ENCODE measurements at regions of chr12 and their contacts with region 1.

Region 1: DNA sequence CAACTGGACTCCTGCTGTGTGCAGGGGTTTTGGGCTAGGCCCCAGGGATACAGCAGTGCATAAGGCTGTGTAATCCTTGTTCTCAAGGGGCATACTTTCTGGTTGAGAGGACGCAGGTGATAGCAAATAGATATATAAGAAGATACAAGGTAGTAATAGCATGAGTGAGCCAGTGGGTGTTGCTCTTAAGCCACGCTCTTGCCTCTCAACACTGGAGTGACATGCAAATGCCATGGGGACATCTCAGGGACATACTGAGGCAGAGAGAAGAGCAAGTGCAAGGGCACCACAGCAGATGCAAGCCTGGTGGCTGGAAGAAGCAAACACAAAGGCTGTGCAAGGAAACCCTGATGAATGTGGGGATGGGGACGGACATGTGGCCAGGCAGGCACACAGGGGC is 223.3 kb downstream of the CHST11 start:
- DNase-seq: no peak
- ATAC-seq: peak in 1 of 8 donors; percentile 12
- H3K4me3 ChIP-seq: no peak overlapping the region
- H3K27ac ChIP-seq: peak overlapping the region in 1 of 10 donors; percentile 37
- H3K4me1 ChIP-seq: peaks cover 0 to 53% (median 13%) of the 10 kb centered on the region in 9 donors
- H3K27me3 ChIP-seq: no peaks in the 10 kb centered on the region
- CTCF ChIP-seq: peak in 1 of 9 donors; percentile 27

Region 2: GRCh38 chr12:104610513-104611235 is 69.4 kb before region 1 on chr12:
- intact Hi-C with region 1: loop called in 1 of 10 experiments (anchors 2 kb)
- DNase-seq: no peak
- ATAC-seq: no peak
- H3K4me3 ChIP-seq: no peak overlapping the region
- H3K27ac ChIP-seq: no peak overlapping the region
- H3K4me1 ChIP-seq: peaks cover 0 to 29% (median 11%) of the 10 kb centered on the region in 9 donors
- H3K27me3 ChIP-seq: no peaks in the 10 kb centered on the region
- CTCF ChIP-seq: no peak

Region 3: GRCh38 chr12:104630230-104630670 is 49.8 kb before region 1 on chr12:
- intact Hi-C with region 1: no loop called
- DNase-seq: no peak
- ATAC-seq: no peak
- H3K4me3 ChIP-seq: no peak overlapping the region
- H3K27ac ChIP-seq: no peak overlapping the region
- H3K4me1 ChIP-seq: peaks cover 0 to 28% (median 4%) of the 10 kb centered on the region in 9 donors
- H3K27me3 ChIP-seq: no peaks in the 10 kb centered on the region
- CTCF ChIP-seq: no peak

Region 4: GRCh38 chr12:104653730-104654664 is 26.1 kb before region 1 on chr12:
- intact Hi-C with region 1: no loop called
- DNase-seq: no peak
- ATAC-seq: peak in 1 of 8 donors; percentile 17
- H3K4me3 ChIP-seq: no peak overlapping the region
- H3K27ac ChIP-seq: no peak overlapping the region
- H3K4me1 ChIP-seq: peaks cover 0 to 42% (median 4%) of the 10 kb centered on the region in 9 donors
- H3K27me3 ChIP-seq: no peaks in the 10 kb centered on the region
- CTCF ChIP-seq: peak in 4 of 9 donors; percentile 19 to 44 (median 32)

Region 5: DNA sequence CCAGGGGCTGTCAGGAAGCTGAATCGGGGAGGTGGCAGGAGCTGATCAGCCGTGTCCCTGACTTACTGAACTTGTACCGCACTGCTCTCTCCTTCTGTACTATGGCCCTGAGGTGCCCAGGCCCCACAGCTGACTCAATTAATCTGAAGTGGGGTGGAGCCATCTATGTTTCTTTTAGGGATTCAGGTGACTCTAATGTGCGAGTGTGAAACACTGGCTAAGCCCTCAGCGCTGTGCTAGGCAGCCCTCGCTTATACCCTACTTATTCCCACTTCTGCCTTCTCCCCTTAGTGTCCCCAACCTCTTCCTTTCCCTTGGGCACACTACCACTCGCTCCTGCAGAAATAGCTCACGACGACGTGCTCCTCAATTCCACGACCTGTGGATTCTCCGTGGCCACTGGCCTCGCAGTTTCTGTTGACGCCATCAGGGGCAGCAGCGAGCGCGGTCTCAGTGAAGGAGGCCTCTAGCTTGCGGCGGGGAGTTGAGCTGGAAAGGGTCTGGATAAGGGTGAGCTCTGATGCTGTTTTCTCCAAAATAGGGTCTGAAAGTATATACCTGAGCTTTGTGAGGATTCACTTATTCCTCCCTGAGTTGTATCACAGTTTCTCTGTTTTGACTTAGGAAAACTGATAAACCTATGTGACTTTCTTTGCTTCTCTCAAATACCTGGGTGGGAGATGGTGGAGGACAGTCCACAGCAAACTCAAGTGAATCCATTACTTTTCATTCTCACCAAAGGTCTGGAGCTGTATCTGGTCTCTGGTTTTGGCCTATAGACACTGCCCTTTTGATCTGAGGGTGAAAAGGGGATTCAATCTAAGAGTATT is 110.4 kb after region 1 on chr12:
- intact Hi-C with region 1: loop called in 1 of 10 experiments (anchors 10 kb)
- DNase-seq: peak; percentile 23 to 56
- ATAC-seq: peak in 3 of 8 donors; percentile 7 to 63 (median 46)
- H3K4me3 ChIP-seq: no peak overlapping the region
- H3K27ac ChIP-seq: no peak overlapping the region
- H3K4me1 ChIP-seq: peaks cover 0 to 17% (median 6%) of the 10 kb centered on the region in 9 donors
- H3K27me3 ChIP-seq: no peaks in the 10 kb centered on the region
- CTCF ChIP-seq: peak; percentile 47 to 80 (median 71)

Region 6: GRCh38 chr12:104858611-104859543 is 178.8 kb after region 1 on chr12:
- intact Hi-C with region 1: loop called in 2 of 10 experiments (anchors 10 kb)
- DNase-seq: no peak
- ATAC-seq: peak in 5 of 8 donors; percentile 43 to 86 (median 62)
- H3K4me3 ChIP-seq: no peak overlapping the region
- H3K27ac ChIP-seq: peak overlapping the region in 8 of 10 donors; percentile 23 to 62 (median 55)
- H3K4me1 ChIP-seq: peaks cover 0 to 23% (median 9%) of the 10 kb centered on the region in 9 donors
- H3K27me3 ChIP-seq: no peaks in the 10 kb centered on the region
- CTCF ChIP-seq: no peak

Region 7: DNA sequence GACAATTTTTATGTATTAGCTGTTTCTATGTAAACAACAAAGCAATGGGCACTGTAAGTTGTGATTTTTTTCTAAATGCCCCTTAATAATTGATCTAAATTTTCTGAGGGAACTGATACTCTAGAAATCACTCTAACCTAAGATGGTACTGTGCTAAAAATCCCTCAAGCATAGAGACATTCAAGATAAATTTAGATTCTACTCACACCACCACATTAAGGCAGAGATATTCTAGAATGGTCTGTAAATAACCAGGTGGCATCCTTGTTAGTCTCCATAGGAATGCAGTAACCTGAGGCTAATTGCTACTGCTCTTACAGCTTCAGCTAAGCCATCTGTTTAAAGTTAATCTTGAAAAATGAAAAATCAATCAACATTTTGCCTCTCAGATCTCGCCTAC is 190.7 kb after region 1 on chr12:
- intact Hi-C with region 1: no loop called
- DNase-seq: no peak
- ATAC-seq: no peak
- H3K4me3 ChIP-seq: no peak overlapping the region
- H3K27ac ChIP-seq: no peak overlapping the region
- H3K4me1 ChIP-seq: peaks cover 0 to 9% (median 0%) of the 10 kb centered on the region in 9 donors
- H3K27me3 ChIP-seq: no peaks in the 10 kb centered on the region
- CTCF ChIP-seq: no peak

Measured in heart right ventricle (tissue), 16 donors.